ENCODE measurements at regions of chr5 and their contacts with region 1.

Region 1: GRCh38 chr5:54415896-54416601 is 39.5 kb upstream of the HSPB3 start:
- H3K4me3 ChIP-seq: no peak overlapping the region
- H3K27ac ChIP-seq: no peak overlapping the region
- H3K4me1 ChIP-seq: no peaks in the 10 kb centered on the region
- CTCF ChIP-seq: no peak

Region 2: DNA sequence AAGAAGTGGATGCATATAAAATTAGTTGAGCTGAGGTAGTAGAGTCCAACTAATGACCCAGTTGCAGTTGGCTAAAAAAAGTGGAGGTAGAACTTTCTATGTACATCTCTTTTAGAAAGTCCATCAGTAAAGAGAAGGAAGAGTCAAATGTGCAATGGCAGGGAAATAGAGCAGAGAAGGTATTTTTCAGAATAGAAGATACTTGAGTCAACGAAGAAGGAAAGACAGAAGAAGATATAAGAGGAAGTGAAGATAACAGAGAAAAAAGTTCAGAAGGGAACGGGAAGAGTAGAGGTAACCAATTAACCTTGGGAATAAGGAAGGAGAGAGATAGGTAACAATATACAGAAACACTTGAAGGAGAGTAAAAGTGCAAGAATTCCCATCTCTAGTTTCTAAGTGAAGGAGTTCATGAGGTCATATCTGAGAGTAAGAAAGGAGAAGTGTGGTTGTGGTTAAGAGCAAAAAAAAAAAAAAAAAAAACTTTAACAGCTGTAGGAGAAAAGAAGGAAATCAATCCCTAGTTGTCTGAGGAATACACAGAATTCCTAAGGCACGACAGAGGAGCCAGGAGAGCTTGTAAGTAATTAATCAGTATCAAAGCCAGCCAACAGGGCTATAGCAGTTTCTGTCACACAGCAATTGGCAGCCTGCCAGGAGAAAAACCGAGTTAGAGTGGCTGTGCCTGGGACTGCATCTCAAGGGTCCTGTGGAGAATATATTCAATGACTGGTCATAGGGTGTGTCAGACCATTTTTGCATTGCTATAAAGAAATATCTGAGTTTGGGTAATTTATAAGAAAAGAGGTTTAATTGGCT is 166.6 kb before region 1 on chr5:
- CTCF ChIA-PET with region 1: interaction called, 30 read pairs
- POLR2A ChIA-PET with region 1: no interaction called
- H3K4me3 ChIP-seq: no peak overlapping the region
- H3K27ac ChIP-seq: no peak overlapping the region
- H3K4me1 ChIP-seq: 0 out of 2 replicates have a peak, but pooled peaks cover 4% of the 10 kb centered on the region
- CTCF ChIP-seq: no peak

Region 3: GRCh38 chr5:54401515-54401914 is 14.5 kb before region 1 on chr5:
- CTCF ChIA-PET with region 1: interaction called, 17 read pairs
- POLR2A ChIA-PET with region 1: no interaction called
- H3K4me3 ChIP-seq: no peak overlapping the region
- H3K27ac ChIP-seq: no peak overlapping the region
- H3K4me1 ChIP-seq: no peaks in the 10 kb centered on the region; the same call in 1 of the 2 replicates
- CTCF ChIP-seq: no peak